ENCODE measurements at regions of chr5 and their contacts with region 1.

Region 1: DNA sequence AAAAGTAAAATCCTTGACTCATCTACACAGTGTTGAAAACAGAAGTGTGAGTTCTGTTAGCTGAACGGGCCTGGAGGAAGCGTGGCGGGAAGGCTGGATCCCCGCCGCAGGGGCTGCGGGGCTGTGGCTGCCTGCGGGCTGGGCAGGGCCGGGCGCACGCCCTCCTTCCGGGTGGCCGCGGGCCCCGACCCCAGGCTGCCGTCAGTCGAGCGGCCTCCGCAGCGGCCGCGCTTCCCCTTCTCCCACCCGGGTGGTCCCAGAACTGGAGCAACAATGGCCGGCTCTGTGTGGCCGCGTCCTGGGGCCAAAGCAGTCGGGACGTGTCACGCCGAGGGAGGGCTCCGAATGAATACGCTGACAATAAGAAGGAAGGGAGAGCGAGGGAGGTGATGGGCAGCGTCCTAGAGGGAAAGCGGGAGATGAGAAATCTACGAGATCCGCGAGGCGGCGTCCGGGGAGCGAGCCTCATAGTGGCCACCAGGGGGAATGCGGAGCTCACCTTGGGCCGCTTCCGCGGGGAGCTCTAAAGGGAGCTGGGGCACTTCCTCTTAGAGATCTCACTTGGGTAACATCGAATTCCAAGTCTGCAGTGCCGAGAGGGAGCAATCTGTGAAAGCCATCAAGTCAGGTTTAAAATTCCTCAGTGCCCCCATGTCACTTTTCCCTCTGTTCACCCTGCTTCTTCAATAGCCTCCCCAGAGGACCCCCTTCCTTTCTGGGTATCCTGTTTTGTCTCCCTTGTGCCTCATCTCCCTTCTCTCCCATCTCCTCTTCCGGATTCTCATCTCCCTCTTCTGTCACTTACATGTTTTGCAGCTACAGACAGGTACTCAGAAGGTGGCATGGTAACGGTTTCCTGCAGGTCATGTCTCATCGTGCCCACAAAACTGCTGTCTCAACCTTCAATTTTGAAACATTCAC is 83.9 kb downstream of the SLC1A3 start:
- DNase-seq: peak; percentile 84
- ATAC-seq: peak; percentile 83
- H3K4me3 ChIP-seq: peak overlapping the region; percentile 45 to 83 (median 70)
- H3K4me3 Mint-ChIP-seq: peak overlapping the region; percentile 94
- H3K27ac ChIP-seq: peak overlapping the region in 1 of 2 donors; percentile 55
- H3K27ac Mint-ChIP-seq: peak overlapping the region; percentile 82
- H3K4me1 ChIP-seq: peaks cover 25 to 33% of the 10 kb centered on the region in 2 donors
- H3K4me1 Mint-ChIP-seq: peaks cover 41% of the 10 kb centered on the region
- H3K27me3 ChIP-seq: no peaks in the 10 kb centered on the region
- H3K27me3 Mint-ChIP-seq: peaks cover 4% of the 10 kb centered on the region
- CTCF ChIP-seq: peak; percentile 92

Region 2: DNA sequence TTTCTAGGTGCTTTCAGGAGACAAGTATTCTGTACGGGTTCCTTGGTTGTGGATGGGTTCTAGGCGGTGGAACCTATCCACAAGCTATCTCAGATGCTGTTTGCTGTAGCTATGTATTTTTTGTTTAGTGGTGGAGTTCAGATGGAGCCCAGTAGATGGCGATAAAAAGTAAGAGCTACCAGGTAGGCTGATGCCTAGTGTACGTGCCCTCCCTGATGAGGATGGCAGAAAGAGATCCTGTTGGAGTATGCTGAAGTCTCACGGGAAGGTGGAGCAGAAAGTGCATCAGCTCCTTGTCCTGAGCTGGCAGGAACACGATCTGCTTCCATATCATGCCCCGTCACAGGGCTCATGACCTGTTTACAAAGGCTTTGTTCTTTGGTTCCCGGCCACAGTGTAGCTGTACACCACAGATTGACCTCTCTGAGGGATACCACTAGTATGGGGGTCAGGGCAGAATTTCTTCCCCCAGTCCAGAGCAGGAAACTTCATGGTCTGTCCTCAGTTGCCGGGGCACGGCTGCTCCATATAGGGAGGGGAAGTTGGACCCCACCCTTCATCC is 611.0 kb before region 1 on chr5:
- CTCF ChIA-PET with region 1: interaction called, 5 read pairs
- POLR2A ChIA-PET with region 1: no interaction called
- intact Hi-C with region 1: loop called (anchors 5 kb)
- DNase-seq: peak; percentile 43
- ATAC-seq: peak; percentile 63
- H3K4me3 ChIP-seq: no peak overlapping the region
- H3K4me3 Mint-ChIP-seq: no peak overlapping the region
- H3K27ac ChIP-seq: no peak overlapping the region
- H3K27ac Mint-ChIP-seq: no peak overlapping the region
- H3K4me1 ChIP-seq: no peaks in the 10 kb centered on the region
- H3K4me1 Mint-ChIP-seq: no peaks in the 10 kb centered on the region
- H3K27me3 ChIP-seq: peaks cover 0 to 2% (median 0%) of the 10 kb centered on the region in 4 experiments
- H3K27me3 Mint-ChIP-seq: peaks cover 26% of the 10 kb centered on the region
- CTCF ChIP-seq: peak; percentile 75

Region 3: GRCh38 chr5:36264202-36264760 is 426.0 kb before region 1 on chr5:
- CTCF ChIA-PET with region 1: interaction called, 41 read pairs
- POLR2A ChIA-PET with region 1: no interaction called
- intact Hi-C with region 1: no loop called
- DNase-seq: no peak
- ATAC-seq: no peak
- H3K4me3 ChIP-seq: no peak overlapping the region
- H3K4me3 Mint-ChIP-seq: no peak overlapping the region
- H3K27ac ChIP-seq: no peak overlapping the region
- H3K27ac Mint-ChIP-seq: no peak overlapping the region
- H3K4me1 ChIP-seq: no peaks in the 10 kb centered on the region
- H3K4me1 Mint-ChIP-seq: no peaks in the 10 kb centered on the region
- H3K27me3 ChIP-seq: peaks cover 0 to 5% (median 0%) of the 10 kb centered on the region in 4 experiments
- H3K27me3 Mint-ChIP-seq: peaks cover 10% of the 10 kb centered on the region
- CTCF ChIP-seq: no peak

Region 4: GRCh38 chr5:36507332-36507952 is 182.9 kb before region 1 on chr5:
- CTCF ChIA-PET with region 1: interaction called, 5 read pairs
- POLR2A ChIA-PET with region 1: no interaction called
- intact Hi-C with region 1: loop called (anchors 5 kb)
- DNase-seq: peak; percentile 69
- ATAC-seq: peak; percentile 51
- H3K4me3 ChIP-seq: no peak overlapping the region
- H3K4me3 Mint-ChIP-seq: no peak overlapping the region
- H3K27ac ChIP-seq: no peak overlapping the region
- H3K27ac Mint-ChIP-seq: no peak overlapping the region
- H3K4me1 ChIP-seq: no peaks in the 10 kb centered on the region
- H3K4me1 Mint-ChIP-seq: no peaks in the 10 kb centered on the region
- H3K27me3 ChIP-seq: peaks cover 0 to 2% (median 0%) of the 10 kb centered on the region in 4 experiments
- H3K27me3 Mint-ChIP-seq: peaks cover 25% of the 10 kb centered on the region
- CTCF ChIP-seq: peak; percentile 87

Region 5: DNA sequence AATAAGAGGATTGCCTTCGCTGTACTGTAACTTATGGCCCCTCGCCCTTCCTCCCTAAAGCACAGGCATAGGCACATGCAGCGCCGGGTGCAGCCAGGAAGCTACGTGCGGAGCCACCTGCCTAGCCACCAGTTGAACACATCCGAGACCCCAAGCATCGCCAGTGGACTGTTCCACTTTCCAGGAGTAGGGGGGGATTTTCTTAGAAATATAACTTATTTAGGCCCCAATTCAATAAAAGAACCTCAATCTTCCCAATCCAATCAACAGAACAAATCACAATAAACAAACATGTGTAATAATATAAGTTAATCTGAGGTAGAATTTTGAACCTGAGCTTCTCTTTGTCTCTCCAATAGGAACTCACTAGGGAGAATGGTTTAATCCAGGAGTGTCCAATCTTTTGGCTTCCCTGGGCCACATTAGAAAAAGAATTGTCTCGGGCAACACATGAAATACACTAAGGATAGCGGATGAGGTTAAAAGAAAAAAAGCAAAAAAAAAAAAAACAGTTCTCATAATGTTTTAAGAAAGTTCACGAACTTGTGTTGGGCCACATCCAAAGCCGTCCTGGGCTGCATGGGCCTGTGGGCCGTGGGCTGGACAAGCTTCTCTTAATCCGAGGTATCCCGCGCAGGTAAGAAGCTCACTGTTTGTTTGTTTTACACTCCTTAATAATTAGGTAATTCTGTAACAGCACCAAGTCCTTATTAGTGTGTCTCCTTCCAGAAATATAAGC is 164.3 kb after region 1 on chr5:
- CTCF ChIA-PET with region 1: no interaction called
- POLR2A ChIA-PET with region 1: no interaction called
- intact Hi-C with region 1: no loop called
- DNase-seq: no peak
- ATAC-seq: no peak
- H3K4me3 ChIP-seq: no peak overlapping the region
- H3K4me3 Mint-ChIP-seq: no peak overlapping the region
- H3K27ac ChIP-seq: no peak overlapping the region
- H3K27ac Mint-ChIP-seq: no peak overlapping the region
- H3K4me1 ChIP-seq: no peaks in the 10 kb centered on the region
- H3K4me1 Mint-ChIP-seq: no peaks in the 10 kb centered on the region
- H3K27me3 ChIP-seq: peaks cover 0 to 3% (median 0%) of the 10 kb centered on the region in 4 experiments
- H3K27me3 Mint-ChIP-seq: peaks cover 9% of the 10 kb centered on the region
- CTCF ChIP-seq: no peak

Region 6: GRCh38 chr5:36875790-36876388 is 185.6 kb after region 1 on chr5:
- CTCF ChIA-PET with region 1: interaction called, 7 read pairs
- POLR2A ChIA-PET with region 1: no interaction called
- intact Hi-C with region 1: loop called (anchors 1 kb)
- DNase-seq: peak; percentile 89
- ATAC-seq: peak; percentile 70
- H3K4me3 ChIP-seq: peak overlapping the region; percentile 85 to 99 (median 94)
- H3K4me3 Mint-ChIP-seq: peak overlapping the region; percentile 91
- H3K27ac ChIP-seq: peak overlapping the region; percentile 92 to 98
- H3K27ac Mint-ChIP-seq: peak overlapping the region; percentile 95
- H3K4me1 ChIP-seq: peaks cover 19 to 42% of the 10 kb centered on the region in 2 donors
- H3K4me1 Mint-ChIP-seq: peaks cover 40% of the 10 kb centered on the region
- H3K27me3 ChIP-seq: no peaks in the 10 kb centered on the region
- H3K27me3 Mint-ChIP-seq: no peaks in the 10 kb centered on the region
- CTCF ChIP-seq: peak; percentile 71